Activated CD8-positive, alpha-beta T cell treated with anti-CD3 and anti-CD28 coated beads for 36 hours (primary cell): ENCODE measurements at regions of chr10 and their contacts with region 1.

Region 1: GRCh38 chr10:63145782-63146181 is 12.7 kb downstream of the NRBF2 start:
- DNase-seq: no peak
- ATAC-seq: peak; percentile 61
- H3K4me3 Mint-ChIP-seq: no peak overlapping the region
- H3K27ac Mint-ChIP-seq: peak overlapping the region; percentile 15
- H3K4me1 Mint-ChIP-seq: peaks cover 38% of the 10 kb centered on the region
- H3K27me3 Mint-ChIP-seq: no peaks in the 10 kb centered on the region
- CTCF ChIP-seq: no peak

Region 2: DNA sequence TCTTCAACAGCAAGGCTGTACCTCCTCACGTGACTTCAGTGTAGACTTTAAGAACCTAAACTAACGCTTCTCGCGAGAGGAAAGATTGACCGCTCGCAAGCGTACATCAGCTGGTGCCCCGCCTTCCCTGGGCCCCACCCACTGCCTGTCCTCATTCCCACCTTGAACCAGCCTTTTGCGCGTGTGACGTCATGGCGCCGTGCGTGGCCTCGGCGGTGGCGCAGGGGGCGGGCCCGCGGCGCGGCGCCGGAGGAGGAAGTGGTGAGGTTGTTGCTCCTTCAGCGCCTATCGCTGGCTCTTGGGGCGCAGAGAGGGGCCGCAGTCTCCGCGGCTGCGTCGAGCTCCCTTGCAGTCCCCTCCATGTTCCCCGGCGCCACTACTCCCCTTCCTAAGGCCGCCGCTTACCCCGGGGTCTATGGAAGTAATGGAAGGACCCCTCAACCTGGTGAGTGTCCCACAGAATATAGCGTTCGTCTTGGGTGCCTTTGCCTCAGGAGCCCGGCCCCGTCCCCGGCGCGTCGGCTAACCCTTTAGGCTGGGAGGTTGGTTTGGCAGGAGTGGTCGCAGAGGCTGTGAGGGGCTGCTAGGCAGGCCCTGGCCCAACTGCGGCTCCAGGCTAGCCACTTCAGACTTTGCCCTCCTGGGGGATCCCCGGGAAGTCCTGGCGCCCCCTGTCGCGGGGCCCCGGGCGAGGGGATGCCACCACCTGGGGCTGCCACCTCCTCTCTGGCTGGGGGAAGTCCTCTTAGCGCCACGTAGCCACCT is 12.5 kb before region 1 on chr10 and contains the start of gene NRBF2:
- CTCF ChIA-PET with region 1: interaction called, 10 read pairs
- POLR2A ChIA-PET with region 1: interaction called, 4 read pairs
- intact Hi-C with region 1: no loop called
- DNase-seq: peak; percentile 99
- ATAC-seq: peak; percentile 92
- H3K4me3 Mint-ChIP-seq: peak within 1 kb of the TSS; percentile 91
- H3K27ac Mint-ChIP-seq: peak within 1 kb of the TSS; percentile 94
- H3K4me1 Mint-ChIP-seq: peaks cover 32% of the 10 kb centered on the region
- H3K27me3 Mint-ChIP-seq: no peaks in the 10 kb centered on the region
- CTCF ChIP-seq: no peak
- total RNA-seq, gene NRBF2: 23.1 to 24.1 TPM